ENCODE measurements at regions of chr1 and their contacts with region 1.

Region 1: DNA sequence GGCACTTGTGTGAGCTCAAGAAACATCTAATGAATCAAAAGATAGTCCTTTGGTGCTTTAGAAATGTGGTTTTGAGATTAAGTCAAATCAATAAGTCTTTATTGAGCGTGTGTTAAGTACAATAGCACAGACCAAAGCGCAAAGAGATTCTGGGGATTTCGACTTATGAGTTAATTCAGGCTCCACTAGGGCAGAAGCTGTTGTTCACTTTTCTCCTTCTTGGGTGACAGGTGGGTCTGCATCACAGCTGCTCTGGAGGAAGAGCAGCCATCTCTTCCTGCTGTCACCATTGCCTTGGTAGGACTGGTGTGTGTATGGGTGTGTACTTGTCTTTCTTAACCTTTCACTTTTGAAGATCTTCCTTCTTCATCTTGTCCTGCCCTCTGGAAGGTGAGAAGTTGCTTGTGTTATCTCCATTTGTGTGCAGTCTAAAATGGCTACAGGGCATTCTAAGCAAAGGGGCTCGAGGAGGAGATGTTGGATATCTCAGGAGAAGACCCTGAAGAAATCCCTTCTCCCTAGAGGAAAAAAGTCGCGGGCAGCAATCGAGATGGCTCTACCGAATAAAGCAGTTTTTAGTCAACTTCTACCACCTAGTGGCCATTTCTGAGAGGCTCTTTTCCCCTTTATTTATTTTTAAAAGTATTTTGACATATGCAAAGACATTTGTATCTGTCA is 22.9 kb upstream of the DISC1 start:
- DNase-seq: peak; percentile 74
- H3K4me3 ChIP-seq: peak overlapping the region in 2 of 3 experiments; percentile 15 to 47
- H3K27ac ChIP-seq: no peak overlapping the region
- H3K4me1 ChIP-seq: peaks cover 8% of the 10 kb centered on the region
- H3K27me3 ChIP-seq: peaks cover 2 to 4% of the 10 kb centered on the region in 2 experiments
- CTCF ChIP-seq: peak; percentile 61 to 65
- POLR2A ChIP-seq: no peak

Region 2: GRCh38 chr1:230642263-230642959 is 961.3 kb before region 1 on chr1 and contains the start of gene COG2:
- CTCF ChIA-PET with region 1: no interaction called
- POLR2A ChIA-PET with region 1: no interaction called
- dilution Hi-C with region 1: no loop called
- intact Hi-C with region 1: loop called (anchors 2 kb)
- DNase-seq: peak; percentile 94
- H3K4me3 ChIP-seq: peak within 1 kb of the TSS; percentile 4 to 95 (median 47)
- H3K27ac ChIP-seq: no peak within 1 kb of the TSS
- H3K4me1 ChIP-seq: peaks cover 12% of the 10 kb centered on the region
- H3K27me3 ChIP-seq: peaks cover 6 to 8% of the 10 kb centered on the region in 2 experiments
- CTCF ChIP-seq: peak; percentile 100
- POLR2A ChIP-seq: peak; percentile 65
- total RNA-seq, gene COG2: 20.7 and 24.2 TPM in 2 replicates

Region 3: DNA sequence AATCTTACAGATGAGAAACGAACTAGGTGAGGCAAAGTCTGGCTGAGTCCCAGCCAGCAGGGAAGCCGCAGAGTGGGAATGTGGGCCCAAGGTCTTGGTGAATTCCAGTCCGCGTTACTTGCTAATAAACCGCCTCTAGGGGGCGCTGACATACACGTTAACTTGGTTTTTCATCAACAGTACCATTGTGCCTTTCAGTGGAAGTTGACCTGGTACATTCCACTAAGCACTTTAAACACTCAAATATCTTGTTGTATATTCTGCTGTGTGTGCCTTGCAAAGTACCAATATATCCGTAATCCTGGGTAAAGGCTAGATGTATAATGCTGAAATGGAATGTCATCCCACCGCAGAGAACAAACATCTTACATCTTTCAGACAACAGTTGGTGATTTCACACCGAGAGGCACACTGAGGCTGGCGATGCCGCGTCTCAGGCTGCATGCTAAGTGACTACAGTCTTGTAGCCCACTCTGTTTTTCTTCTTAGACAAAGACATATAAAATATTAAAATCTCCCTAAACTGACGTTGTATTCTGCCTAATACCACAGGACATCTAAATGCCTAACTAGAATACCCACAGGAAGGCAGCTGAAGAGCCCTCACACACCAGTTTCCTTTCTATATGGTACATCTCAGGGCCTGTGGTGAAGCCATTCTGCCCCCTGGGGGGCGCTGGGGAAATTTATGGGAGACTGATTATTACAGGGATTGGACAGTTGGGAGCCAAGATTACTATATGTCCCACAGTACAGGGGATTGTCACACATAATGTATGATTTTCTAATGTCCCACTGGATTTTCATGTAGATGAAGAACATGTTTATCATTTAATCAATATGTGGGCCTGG is 686.2 kb before region 1 on chr1:
- CTCF ChIA-PET with region 1: no interaction called
- POLR2A ChIA-PET with region 1: no interaction called
- dilution Hi-C with region 1: no loop called
- intact Hi-C with region 1: loop called (anchors 1 kb)
- DNase-seq: peak; percentile 72
- H3K4me3 ChIP-seq: no peak overlapping the region
- H3K27ac ChIP-seq: no peak overlapping the region
- H3K4me1 ChIP-seq: no peaks in the 10 kb centered on the region
- H3K27me3 ChIP-seq: no peaks in the 10 kb centered on the region
- CTCF ChIP-seq: peak; percentile 73 to 77
- POLR2A ChIP-seq: no peak

Region 4: GRCh38 chr1:231240883-231241735 is 362.6 kb before region 1 on chr1 and contains the start of gene GNPAT:
- CTCF ChIA-PET with region 1: interaction called, 3 read pairs
- POLR2A ChIA-PET with region 1: no interaction called
- dilution Hi-C with region 1: no loop called
- intact Hi-C with region 1: loop called (anchors 2 kb)
- DNase-seq: peak; percentile 87
- H3K4me3 ChIP-seq: peak within 1 kb of the TSS; percentile 57 to 97 (median 94)
- H3K27ac ChIP-seq: peak within 1 kb of the TSS; percentile 59
- H3K4me1 ChIP-seq: peaks cover 19% of the 10 kb centered on the region
- H3K27me3 ChIP-seq: no peaks in the 10 kb centered on the region
- CTCF ChIP-seq: no peak
- POLR2A ChIP-seq: peak; percentile 94
- total RNA-seq, gene GNPAT: 44.1 and 51.4 TPM in 2 replicates

Region 5: GRCh38 chr1:231357831-231358354 is 245.8 kb before region 1 on chr1:
- CTCF ChIA-PET with region 1: interaction called, 12 read pairs
- POLR2A ChIA-PET with region 1: no interaction called
- dilution Hi-C with region 1: no loop called
- intact Hi-C with region 1: loop called (anchors 1 kb)
- DNase-seq: peak; percentile 82
- H3K4me3 ChIP-seq: no peak overlapping the region
- H3K27ac ChIP-seq: no peak overlapping the region
- H3K4me1 ChIP-seq: peaks cover 7% of the 10 kb centered on the region
- H3K27me3 ChIP-seq: no peaks in the 10 kb centered on the region
- CTCF ChIP-seq: peak; percentile 54
- POLR2A ChIP-seq: no peak

Region 6: GRCh38 chr1:231806623-231807495 is 203.1 kb after region 1 on chr1:
- CTCF ChIA-PET with region 1: interaction called, 3 read pairs
- POLR2A ChIA-PET with region 1: no interaction called
- dilution Hi-C with region 1: no loop called
- intact Hi-C with region 1: loop called (anchors 5 kb)
- DNase-seq: peak; percentile 50
- H3K4me3 ChIP-seq: no peak overlapping the region
- H3K27ac ChIP-seq: no peak overlapping the region
- H3K4me1 ChIP-seq: peaks cover 9% of the 10 kb centered on the region
- H3K27me3 ChIP-seq: no peaks in the 10 kb centered on the region
- CTCF ChIP-seq: peak; percentile 74 to 86
- POLR2A ChIP-seq: no peak